CD4-positive, alpha-beta T cell (primary cell): ENCODE measurements at regions of chr6 and their contacts with region 1.

Region 1: DNA sequence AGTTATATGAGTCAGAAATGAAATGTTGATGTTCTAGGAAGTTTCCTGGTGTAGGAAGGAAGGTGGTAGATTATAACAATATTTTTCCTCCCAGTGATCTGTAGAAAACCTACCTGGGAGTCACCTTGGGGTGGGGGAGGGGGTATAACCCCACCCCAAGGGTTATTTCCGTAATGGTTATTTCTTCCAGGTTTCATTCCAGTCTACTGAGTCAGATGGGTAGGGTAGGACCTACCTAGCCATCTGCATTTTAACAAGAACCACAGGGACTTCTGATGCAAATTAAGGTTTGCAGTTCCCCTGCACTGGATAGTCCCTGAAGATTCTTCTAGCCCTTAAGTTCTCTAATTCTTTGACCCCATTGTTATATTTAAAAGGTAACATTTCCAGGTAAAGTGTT is 88.9 kb downstream of the ARMC2 start:
- DNase-seq: no peak
- ATAC-seq: no peak
- H3K4me3 ChIP-seq: no peak overlapping the region
- H3K4me3 Mint-ChIP-seq: no peak overlapping the region
- H3K27ac ChIP-seq: no peak overlapping the region
- H3K27ac Mint-ChIP-seq: no peak overlapping the region
- H3K4me1 ChIP-seq: peaks cover 12% of the 10 kb centered on the region
- H3K4me1 Mint-ChIP-seq: peaks cover 23% of the 10 kb centered on the region
- H3K27me3 ChIP-seq: no peaks in the 10 kb centered on the region
- H3K27me3 Mint-ChIP-seq: no peaks in the 10 kb centered on the region
- CTCF ChIP-seq: no peak

Region 2: GRCh38 chr6:108581237-108581931 is 355.8 kb before region 1 on chr6:
- CTCF ChIA-PET with region 1: no interaction called
- POLR2A ChIA-PET with region 1: no interaction called
- intact Hi-C with region 1: no loop called
- DNase-seq: peak in 3 of 14 experiments; percentile 31 to 60 (median 37)
- ATAC-seq: no peak
- H3K4me3 ChIP-seq: no peak overlapping the region
- H3K4me3 Mint-ChIP-seq: peak overlapping the region; percentile 42
- H3K27ac ChIP-seq: peak overlapping the region; percentile 18 to 29
- H3K27ac Mint-ChIP-seq: peak overlapping the region; percentile 65
- H3K4me1 ChIP-seq: peaks cover 19% of the 10 kb centered on the region
- H3K4me1 Mint-ChIP-seq: peaks cover 72% of the 10 kb centered on the region
- H3K27me3 ChIP-seq: no peaks in the 10 kb centered on the region
- H3K27me3 Mint-ChIP-seq: no peaks in the 10 kb centered on the region
- CTCF ChIP-seq: no peak

Region 3: DNA sequence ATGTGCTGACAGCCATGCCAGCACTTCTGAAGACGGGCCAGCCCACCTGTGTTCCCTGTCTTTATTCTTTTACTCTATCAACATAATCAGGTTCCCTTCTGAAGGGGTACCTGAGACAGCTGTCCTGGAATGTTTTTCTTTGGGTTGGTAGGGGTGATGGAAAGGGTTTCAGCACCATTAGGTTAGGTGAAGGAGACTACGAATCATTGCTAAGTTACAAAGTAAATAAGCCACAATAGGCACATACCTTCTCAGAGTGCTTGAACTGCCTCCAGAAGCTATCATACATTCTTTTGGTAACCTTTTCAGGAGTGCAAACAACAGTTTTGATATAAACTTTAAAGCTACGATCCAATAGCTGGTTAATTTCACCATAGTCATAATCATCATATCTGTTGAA is 51.1 kb after region 1 on chr6:
- CTCF ChIA-PET with region 1: no interaction called
- POLR2A ChIA-PET with region 1: no interaction called
- intact Hi-C with region 1: loop called in 1 of 2 experiments (anchors 5 kb)
- DNase-seq: no peak
- ATAC-seq: no peak
- H3K4me3 ChIP-seq: no peak overlapping the region
- H3K4me3 Mint-ChIP-seq: no peak overlapping the region
- H3K27ac ChIP-seq: no peak overlapping the region
- H3K27ac Mint-ChIP-seq: no peak overlapping the region
- H3K4me1 ChIP-seq: no peaks in the 10 kb centered on the region
- H3K4me1 Mint-ChIP-seq: no peaks in the 10 kb centered on the region
- H3K27me3 ChIP-seq: no peaks in the 10 kb centered on the region
- H3K27me3 Mint-ChIP-seq: no peaks in the 10 kb centered on the region
- CTCF ChIP-seq: no peak